Activated CD8-positive, alpha-beta T cell treated with anti-CD3 and anti-CD28 coated beads, Interleukin-2, amount 10 ng/mL, durations not matched to agents 7 days and 5 days (primary cell): ENCODE measurements at regions of chr3 and their contacts with region 1.

Region 1: GRCh38 chr3:17412950-17413530 is 329.4 kb downstream of the TBC1D5 start:
- DNase-seq: peak; percentile 48
- ATAC-seq: peak; percentile 76
- H3K4me3 Mint-ChIP-seq: no peak overlapping the region
- H3K27ac Mint-ChIP-seq: no peak overlapping the region
- H3K4me1 Mint-ChIP-seq: no peaks in the 10 kb centered on the region
- H3K27me3 Mint-ChIP-seq: no peaks in the 10 kb centered on the region

Region 2: GRCh38 chr3:16600780-16601539 is 812.1 kb before region 1 on chr3:
- CTCF ChIA-PET with region 1: interaction called, 16 read pairs
- POLR2A ChIA-PET with region 1: no interaction called
- DNase-seq: peak; percentile 87
- ATAC-seq: peak; percentile 55
- H3K4me3 Mint-ChIP-seq: no peak overlapping the region
- H3K27ac Mint-ChIP-seq: no peak overlapping the region
- H3K4me1 Mint-ChIP-seq: peaks cover 29% of the 10 kb centered on the region
- H3K27me3 Mint-ChIP-seq: peaks cover 22% of the 10 kb centered on the region

Region 3: DNA sequence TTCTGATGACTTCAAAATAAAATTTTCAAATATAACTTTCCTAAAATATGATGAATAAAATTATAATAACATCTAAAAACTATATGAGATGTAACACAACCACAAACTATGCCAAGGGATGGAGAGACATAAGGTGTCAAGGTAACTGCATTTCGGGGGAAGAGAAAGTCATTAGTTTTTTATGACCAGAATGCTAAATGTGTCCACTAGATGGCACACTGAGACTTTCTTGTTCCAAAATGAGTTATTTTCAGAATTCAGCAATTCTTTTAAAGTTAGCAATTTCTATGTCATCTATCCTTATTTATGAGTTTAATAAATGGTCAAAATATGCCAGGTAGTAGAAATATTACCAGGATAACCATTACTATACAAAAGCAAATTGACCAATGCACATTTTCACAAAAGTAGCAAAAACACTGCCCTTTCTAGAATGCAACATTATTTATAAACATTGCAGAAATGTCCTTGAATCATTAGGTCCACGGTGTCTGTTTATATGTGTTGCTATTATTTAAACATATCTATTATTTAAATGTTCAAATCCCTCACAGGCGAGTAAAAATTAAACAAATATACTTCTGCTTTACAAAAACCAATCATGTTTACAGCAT is 154.1 kb before region 1 on chr3:
- CTCF ChIA-PET with region 1: interaction called, 11 read pairs
- POLR2A ChIA-PET with region 1: no interaction called
- DNase-seq: peak; percentile 46
- ATAC-seq: no peak
- H3K4me3 Mint-ChIP-seq: no peak overlapping the region
- H3K27ac Mint-ChIP-seq: no peak overlapping the region
- H3K4me1 Mint-ChIP-seq: no peaks in the 10 kb centered on the region
- H3K27me3 Mint-ChIP-seq: no peaks in the 10 kb centered on the region

Region 4: GRCh38 chr3:17423786-17424536 is 10.9 kb after region 1 on chr3:
- CTCF ChIA-PET with region 1: interaction called, 11 read pairs
- POLR2A ChIA-PET with region 1: no interaction called
- DNase-seq: no peak
- ATAC-seq: no peak
- H3K4me3 Mint-ChIP-seq: no peak overlapping the region
- H3K27ac Mint-ChIP-seq: no peak overlapping the region
- H3K4me1 Mint-ChIP-seq: no peaks in the 10 kb centered on the region
- H3K27me3 Mint-ChIP-seq: no peaks in the 10 kb centered on the region